ENCODE measurements at regions of chr2 and their contacts with region 1.

Region 1: GRCh38 chr2:158006961-158007719 is 94.5 kb upstream of the UPP2 start:
- DNase-seq: no peak
- H3K4me3 ChIP-seq: no peak overlapping the region
- H3K27ac ChIP-seq: no peak overlapping the region
- H3K4me1 ChIP-seq: peaks cover 0 to 25% (median 0%) of the 10 kb centered on the region in 3 donors
- H3K27me3 ChIP-seq: no peaks in the 10 kb centered on the region
- CTCF ChIP-seq: no peak
- POLR2A ChIP-seq: no peak

Region 2: GRCh38 chr2:157492189-157492773 is 514.9 kb before region 1 on chr2:
- intact Hi-C with region 1: loop called (anchors 10 kb)
- DNase-seq: no peak
- H3K4me3 ChIP-seq: no peak overlapping the region
- H3K27ac ChIP-seq: no peak overlapping the region
- H3K4me1 ChIP-seq: no peaks in the 10 kb centered on the region
- H3K27me3 ChIP-seq: peaks cover 0 to 10% (median 0%) of the 10 kb centered on the region in 4 donors
- CTCF ChIP-seq: peak; percentile 45 to 75 (median 60)
- POLR2A ChIP-seq: no peak

Region 3: DNA sequence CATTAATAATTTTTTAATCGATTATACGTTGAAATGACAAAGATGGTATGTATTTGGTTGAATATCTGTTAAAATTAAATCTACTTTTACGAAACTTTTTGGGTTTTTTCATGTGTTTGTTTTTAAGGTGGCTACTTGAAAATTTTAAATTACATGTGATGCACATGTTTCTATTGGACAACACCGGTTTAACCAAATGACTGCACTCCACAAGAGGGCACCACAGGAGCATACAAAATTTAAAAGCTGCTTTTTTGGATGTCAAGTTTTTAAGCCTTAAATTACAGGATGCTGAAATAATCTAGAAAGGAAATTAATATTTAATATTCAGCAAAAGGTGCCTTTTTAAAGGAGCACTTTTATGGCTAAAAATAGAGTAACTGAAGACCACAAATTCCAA is 229.7 kb before region 1 on chr2:
- intact Hi-C with region 1: loop called (anchors 5 kb)
- DNase-seq: no peak
- H3K4me3 ChIP-seq: no peak overlapping the region
- H3K27ac ChIP-seq: no peak overlapping the region
- H3K4me1 ChIP-seq: peaks cover 0 to 11% (median 8%) of the 10 kb centered on the region in 3 donors
- H3K27me3 ChIP-seq: no peaks in the 10 kb centered on the region
- CTCF ChIP-seq: peak in 5 of 6 experiments; percentile 57 to 83 (median 64)
- POLR2A ChIP-seq: no peak

Region 4: DNA sequence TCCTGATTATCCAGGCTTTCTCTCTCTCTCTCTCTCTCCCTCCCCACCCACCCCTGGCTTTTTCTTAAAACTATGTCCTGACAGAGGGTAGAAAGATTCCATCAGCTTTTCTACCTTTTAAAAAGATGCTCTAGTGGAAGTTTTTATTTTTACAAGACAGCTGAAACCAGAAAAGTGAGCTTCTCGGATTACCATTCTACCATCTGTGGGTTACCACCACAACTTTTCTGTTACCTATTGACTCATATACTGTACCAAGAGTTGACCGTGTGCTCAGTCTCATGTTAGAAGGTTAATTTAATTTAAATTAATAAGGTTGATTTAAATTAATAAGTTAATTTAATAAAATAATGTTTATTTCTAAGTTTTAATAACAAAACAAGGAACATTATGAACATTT is 232.1 kb after region 1 on chr2:
- intact Hi-C with region 1: no loop called
- DNase-seq: no peak
- H3K4me3 ChIP-seq: no peak overlapping the region
- H3K27ac ChIP-seq: no peak overlapping the region
- H3K4me1 ChIP-seq: no peaks in the 10 kb centered on the region
- H3K27me3 ChIP-seq: no peaks in the 10 kb centered on the region
- CTCF ChIP-seq: no peak
- POLR2A ChIP-seq: no peak